Naive thymus-derived CD8-positive, alpha-beta T cell (primary cell): ENCODE measurements at regions of chr14 and their contacts with region 1.

Region 1: DNA sequence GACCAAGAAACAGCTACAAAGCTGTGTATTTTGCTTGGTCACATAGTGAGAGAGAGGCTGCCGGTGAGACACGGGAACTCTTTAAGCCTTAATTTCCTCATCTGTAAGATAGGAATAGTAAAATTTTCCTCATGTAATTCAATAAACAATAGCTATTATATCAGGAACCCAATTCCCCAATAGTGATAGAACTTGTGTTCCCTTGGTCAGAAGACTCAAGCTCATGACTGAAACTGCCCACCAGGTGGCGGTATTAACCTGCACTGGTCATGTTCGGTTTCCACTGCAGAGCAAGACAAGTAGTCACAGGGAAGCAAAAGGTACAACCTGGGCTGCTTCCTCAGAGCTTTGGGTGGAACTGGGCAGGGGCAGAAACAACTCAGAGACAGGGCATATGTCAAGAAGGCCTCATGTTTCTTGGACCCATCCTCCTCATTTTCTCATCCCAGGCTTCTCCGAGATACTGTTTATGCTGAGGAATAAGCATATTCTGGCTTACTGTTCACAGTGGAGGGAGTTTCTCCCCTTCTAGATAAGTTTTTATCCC is 4.2 kb upstream of the AJUBA start:
- DNase-seq: peak; percentile 73 to 93 (median 84)
- ATAC-seq: peak; percentile 59 to 69
- H3K4me3 Mint-ChIP-seq: no peak overlapping the region
- H3K27ac Mint-ChIP-seq: peak overlapping the region in 1 of 10 donors; percentile 25
- H3K4me1 Mint-ChIP-seq: peaks cover 0 to 2% (median 0%) of the 10 kb centered on the region in 4 donors
- H3K27me3 Mint-ChIP-seq: no peaks in the 10 kb centered on the region

Region 2: GRCh38 chr14:22973217-22974032 is 13.2 kb before region 1 on chr14:
- POLR2A ChIA-PET with region 1: interaction called, 12 read pairs
- DNase-seq: peak in 6 of 10 donors; percentile 23 to 54 (median 46)
- ATAC-seq: peak in 1 of 2 donors; percentile 56
- H3K4me3 Mint-ChIP-seq: no peak overlapping the region
- H3K27ac Mint-ChIP-seq: peak overlapping the region in 1 of 10 donors; percentile 78
- H3K4me1 Mint-ChIP-seq: no peaks in the 10 kb centered on the region
- H3K27me3 Mint-ChIP-seq: peaks cover 0 to 2% (median 0%) of the 10 kb centered on the region in 5 donors

Region 3: DNA sequence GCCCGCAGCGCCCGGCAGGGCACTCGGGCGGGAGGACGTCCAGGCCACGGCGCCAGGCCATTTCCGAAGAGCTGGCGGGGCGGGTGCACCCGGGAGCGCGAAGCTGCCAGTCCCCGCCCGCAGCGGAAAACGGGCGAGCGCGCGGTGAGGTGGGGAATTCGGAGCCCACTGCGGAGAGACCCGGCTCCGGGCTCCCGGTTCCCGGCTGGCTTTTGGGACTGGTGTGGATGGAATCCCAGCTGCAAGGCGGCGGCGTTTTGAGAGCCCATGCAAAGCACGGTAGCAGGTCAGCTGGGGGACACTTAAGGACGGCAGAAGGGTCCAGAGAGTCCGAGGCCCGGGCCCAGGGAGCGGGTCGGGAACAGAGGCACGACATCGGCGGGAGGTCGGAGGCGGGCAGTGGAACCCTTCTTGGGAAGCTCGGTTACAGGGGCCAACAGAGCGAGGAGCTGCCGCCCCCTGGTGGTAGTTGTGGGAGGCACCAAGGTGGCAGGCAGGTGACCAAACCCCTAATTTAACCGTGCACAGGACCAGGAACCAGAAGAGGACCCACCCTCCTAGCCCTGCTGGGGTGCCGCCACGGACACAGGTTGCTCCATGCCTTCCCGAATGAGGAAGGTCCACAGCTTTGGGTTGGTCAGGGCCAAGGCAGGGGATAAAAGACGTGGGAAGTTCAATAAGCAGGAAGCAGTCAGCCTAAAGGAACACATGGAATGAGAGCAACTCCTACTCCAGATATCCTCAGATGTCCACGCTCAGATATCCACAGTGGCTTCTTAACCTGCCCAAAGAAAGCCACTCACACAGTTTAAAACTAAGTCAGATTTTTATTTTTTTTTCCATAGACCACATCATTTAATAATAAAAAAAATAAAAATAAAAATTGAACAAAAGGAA is 71.4 kb after region 1 on chr14:
- POLR2A ChIA-PET with region 1: interaction called, 44 read pairs
- DNase-seq: peak; percentile 73 to 90 (median 84)
- ATAC-seq: peak; percentile 73 to 75
- H3K4me3 Mint-ChIP-seq: peak overlapping the region; percentile 79 to 90 (median 88)
- H3K27ac Mint-ChIP-seq: peak overlapping the region in 8 of 10 donors; percentile 24 to 80 (median 66)
- H3K4me1 Mint-ChIP-seq: peaks cover 15 to 21% (median 20%) of the 10 kb centered on the region in 4 donors
- H3K27me3 Mint-ChIP-seq: no peaks in the 10 kb centered on the region

Region 4: DNA sequence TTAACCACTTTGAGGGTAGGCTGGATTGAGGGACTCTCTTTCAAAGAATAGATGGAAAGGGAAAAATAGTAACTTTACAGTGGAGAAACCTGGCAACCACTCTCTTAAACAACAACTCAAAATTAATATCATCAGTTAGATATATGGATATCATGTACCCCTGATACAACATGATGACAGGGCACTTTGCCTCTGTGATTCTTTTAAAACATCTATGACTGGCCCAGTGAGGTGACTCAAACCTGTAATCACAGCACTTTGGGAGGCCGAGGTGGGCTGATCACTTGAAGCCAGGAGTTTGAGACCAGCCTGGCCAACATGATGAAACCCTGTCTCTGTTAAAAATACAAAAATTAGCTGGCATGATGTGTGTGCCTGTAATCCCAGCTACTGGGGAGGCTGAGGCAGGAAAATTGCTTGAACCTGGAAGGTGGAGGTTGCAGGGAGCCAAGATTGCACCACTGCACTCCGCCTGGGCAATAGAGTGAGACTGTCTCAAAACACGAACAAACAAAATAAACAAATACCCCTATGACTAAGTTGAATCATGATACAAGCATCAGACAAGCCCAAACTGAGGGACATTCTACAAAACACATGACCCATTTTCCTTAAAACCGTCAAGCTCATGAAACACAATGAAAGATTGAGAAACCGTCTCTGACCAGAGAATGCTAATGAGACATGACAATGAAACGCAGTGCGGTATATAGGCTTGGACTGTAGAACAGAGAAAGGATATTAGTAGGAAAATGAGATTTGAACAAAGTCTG is 223.3 kb after region 1 on chr14:
- POLR2A ChIA-PET with region 1: no interaction called
- DNase-seq: no peak
- ATAC-seq: no peak
- H3K4me3 Mint-ChIP-seq: no peak overlapping the region
- H3K27ac Mint-ChIP-seq: no peak overlapping the region
- H3K4me1 Mint-ChIP-seq: no peaks in the 10 kb centered on the region
- H3K27me3 Mint-ChIP-seq: peaks cover 11 to 42% (median 20%) of the 10 kb centered on the region in 5 donors